GM10248 (cell line): ENCODE measurements at regions of chr5 and their contacts with region 1.

Region 1: GRCh38 chr5:83564069-83564749 is 92.7 kb downstream of the VCAN start:
- DNase-seq: peak; percentile 17
- CTCF ChIP-seq: peak; percentile 67

Region 2: DNA sequence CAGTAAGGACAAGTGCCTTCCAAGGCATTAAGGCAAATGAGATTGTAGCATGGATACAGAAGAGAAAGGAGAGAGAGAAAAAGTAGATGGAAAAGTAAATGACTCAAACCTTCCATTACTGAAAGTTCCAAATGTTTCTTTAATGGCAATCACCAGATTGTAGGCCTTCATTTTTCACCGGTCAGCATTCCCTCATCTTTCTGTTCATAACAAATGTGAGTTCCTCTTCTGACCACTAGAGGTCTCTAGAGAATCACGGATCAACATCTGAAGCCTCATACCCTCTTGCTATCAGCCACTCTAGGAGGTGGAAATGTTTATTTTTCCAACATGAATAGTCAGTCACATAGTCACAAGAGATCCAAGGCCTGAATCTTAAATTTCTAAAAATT is 1212.5 kb before region 1 on chr5:
- CTCF ChIA-PET with region 1: interaction called, 102 read pairs
- POLR2A ChIA-PET with region 1: no interaction called
- DNase-seq: peak; percentile 53
- CTCF ChIP-seq: peak; percentile 64

Region 3: DNA sequence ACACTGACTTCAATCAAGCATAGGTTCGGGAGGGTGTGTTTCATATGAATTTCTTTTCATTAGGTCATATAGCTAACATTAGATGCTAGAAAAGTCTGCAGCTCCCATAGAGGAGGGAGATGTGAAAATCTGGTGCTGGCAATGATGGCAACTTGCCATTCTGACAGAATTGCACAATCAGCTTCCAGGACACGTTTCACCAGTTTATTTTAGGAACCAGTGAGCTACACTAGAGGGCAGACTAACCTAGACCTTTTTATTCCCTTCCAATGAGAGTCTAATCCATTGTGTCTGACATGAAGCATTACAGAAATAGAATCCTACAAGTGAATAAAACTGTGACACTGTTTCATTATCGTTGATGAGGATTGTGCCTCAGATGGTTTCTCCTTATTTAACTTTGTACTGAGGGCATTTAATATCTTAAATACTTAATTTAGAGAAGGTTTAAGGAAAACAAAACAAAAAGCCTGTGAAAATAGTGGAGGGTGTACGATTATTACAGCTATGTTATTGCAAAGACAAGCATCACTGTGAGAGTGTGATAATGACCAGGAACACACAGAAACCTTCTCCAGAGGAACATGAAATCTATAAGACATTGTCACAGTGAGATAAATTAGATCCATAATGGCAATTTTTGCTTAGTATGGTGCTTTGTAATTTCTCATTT is 922.7 kb before region 1 on chr5:
- CTCF ChIA-PET with region 1: interaction called, 33 read pairs
- POLR2A ChIA-PET with region 1: no interaction called
- DNase-seq: peak; percentile 45
- CTCF ChIP-seq: peak; percentile 56

Region 4: DNA sequence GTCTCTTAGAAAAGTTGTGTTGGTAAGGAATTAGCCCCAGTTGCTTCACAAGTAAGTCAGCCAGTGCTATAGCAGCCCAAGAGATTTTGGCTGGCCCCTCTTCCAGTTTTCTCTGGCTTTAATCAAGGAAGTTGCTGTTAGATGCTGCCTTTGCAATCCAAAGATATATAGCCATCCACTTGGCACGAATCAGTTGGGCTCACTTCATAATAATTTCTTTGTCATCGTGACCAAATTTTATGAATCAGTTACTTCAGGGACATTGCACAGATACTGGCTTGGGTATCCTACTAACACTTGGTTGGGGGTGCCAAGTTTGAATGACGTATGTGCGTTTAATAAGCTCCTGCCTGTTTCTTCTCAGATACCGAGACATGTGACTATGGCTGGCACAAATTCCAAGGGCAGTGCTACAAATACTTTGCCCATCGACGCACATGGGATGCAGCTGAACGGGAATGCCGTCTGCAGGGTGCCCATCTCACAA is 11.2 kb before region 1 on chr5:
- CTCF ChIA-PET with region 1: interaction called, 14 read pairs
- POLR2A ChIA-PET with region 1: no interaction called
- DNase-seq: no peak
- CTCF ChIP-seq: no peak

Region 5: DNA sequence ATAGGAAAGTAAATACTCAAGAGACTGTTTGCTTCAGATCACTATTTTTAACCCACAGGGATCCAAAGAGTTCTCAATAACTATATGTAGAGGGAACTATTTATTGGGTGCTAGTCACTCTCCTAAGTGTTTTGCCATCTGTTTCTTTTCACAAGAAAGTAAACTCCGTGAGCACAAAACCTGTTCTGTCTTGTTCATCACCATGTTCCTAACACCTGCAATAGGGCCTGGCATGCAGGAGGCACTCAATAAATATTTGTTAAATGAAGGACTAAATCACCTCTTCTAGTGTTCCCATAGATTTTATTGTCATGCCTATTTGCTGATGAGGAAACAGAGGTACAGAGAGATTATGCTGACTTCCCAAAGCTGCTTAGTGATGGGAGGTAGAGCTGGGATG is 25.6 kb after region 1 on chr5:
- CTCF ChIA-PET with region 1: no interaction called
- POLR2A ChIA-PET with region 1: no interaction called
- DNase-seq: no peak
- CTCF ChIP-seq: no peak